Prostate gland (tissue), 2 donors: ENCODE measurements at regions of chr15 and their contacts with region 1.

Region 1: DNA sequence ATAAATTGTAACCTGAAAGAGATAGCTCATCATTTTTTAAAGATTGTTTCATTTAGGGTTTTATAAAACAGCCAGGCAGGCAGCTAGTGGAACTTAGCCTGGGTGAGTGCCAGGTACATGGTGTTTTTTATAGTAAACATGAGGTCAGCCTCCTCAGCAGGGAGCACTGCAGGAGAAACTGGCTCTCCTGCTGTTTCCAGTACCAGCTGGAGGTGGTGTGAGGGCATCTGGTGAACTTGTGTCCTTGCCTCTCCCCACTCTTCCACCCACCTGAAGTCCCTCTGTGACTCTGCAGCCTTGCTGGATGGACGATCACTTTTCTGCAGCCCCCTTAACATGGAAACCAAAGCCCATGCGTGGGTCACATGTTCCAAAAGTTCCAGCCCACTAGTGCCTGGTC is 128.4 kb downstream of the FAM174B start:
- DNase-seq: peak; percentile 90
- H3K4me3 ChIP-seq: no peak overlapping the region
- H3K27ac ChIP-seq: peak overlapping the region; percentile 38 to 75
- H3K4me1 ChIP-seq: peaks cover 6% of the 10 kb centered on the region
- H3K27me3 ChIP-seq: no peaks in the 10 kb centered on the region
- CTCF ChIP-seq: no peak
- POLR2A ChIP-seq: no peak

Region 2: DNA sequence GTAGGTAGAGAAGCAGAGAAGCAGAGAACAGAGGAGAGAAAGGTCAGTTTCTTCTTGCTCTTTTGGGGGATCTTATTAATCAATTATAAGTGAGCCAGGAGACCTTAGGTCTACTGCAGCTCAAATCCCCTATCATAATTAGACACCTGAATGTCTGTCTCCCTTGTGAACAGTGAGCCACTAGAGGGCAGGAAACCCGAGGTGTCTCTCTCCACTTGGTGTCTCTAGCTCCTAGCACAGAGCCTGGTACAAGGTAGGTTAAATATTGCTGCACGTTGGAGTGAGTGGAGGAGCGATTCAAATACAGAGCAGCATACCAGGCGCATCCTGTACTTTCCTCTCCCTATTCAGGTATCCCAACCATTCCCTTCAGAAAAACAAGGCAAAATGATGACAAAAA is 135.6 kb before region 1 on chr15:
- intact Hi-C with region 1: no loop called
- DNase-seq: no peak
- H3K4me3 ChIP-seq: no peak overlapping the region
- H3K27ac ChIP-seq: no peak overlapping the region
- H3K4me1 ChIP-seq: no peaks in the 10 kb centered on the region
- H3K27me3 ChIP-seq: peaks cover 10% of the 10 kb centered on the region
- CTCF ChIP-seq: no peak
- POLR2A ChIP-seq: no peak

Region 3: GRCh38 chr15:92714477-92715401 is 187.5 kb after region 1 on chr15:
- intact Hi-C with region 1: loop called (anchors 2 kb)
- DNase-seq: peak; percentile 74
- H3K4me3 ChIP-seq: peak overlapping the region; percentile 35 to 56
- H3K27ac ChIP-seq: peak overlapping the region; percentile 73 to 79
- H3K4me1 ChIP-seq: no peaks in the 10 kb centered on the region
- H3K27me3 ChIP-seq: no peaks in the 10 kb centered on the region
- CTCF ChIP-seq: peak; percentile 59 to 92 (median 92)
- POLR2A ChIP-seq: peak; percentile 19